T-cell (primary cell): ENCODE measurements at regions of chr11 and their contacts with region 1.

Region 1: GRCh38 chr11:82883853-82884252 is 16.4 kb downstream of the PRCP start:
- DNase-seq: no peak
- ATAC-seq: no peak
- H3K4me3 ChIP-seq: no peak overlapping the region
- H3K4me3 Mint-ChIP-seq: no peak overlapping the region
- H3K27ac ChIP-seq: no peak overlapping the region
- H3K27ac Mint-ChIP-seq: no peak overlapping the region
- H3K4me1 ChIP-seq: no peaks in the 10 kb centered on the region
- H3K4me1 Mint-ChIP-seq: peaks cover 2 to 12% (median 2%) of the 10 kb centered on the region in 3 donors
- H3K27me3 ChIP-seq: no peaks in the 10 kb centered on the region
- H3K27me3 Mint-ChIP-seq: no peaks in the 10 kb centered on the region

Region 2: DNA sequence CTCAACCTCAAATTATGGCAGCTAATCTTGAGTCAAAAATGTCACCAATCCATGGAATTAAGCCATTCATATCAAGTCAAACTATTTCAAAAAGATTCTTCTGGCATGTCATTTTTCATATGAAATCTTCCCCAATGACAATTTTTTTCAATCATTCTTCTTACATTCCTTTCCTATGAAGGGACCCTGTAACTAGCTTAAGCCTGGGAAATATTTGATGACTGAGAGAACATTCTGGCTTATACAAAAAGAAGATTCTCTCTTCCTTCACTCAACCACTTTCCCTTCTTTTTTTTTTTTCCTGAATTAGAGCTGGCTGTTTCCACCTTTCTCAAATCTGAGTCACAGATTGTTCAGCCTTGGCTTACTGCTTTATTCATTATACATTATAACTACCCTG is 1053.9 kb before region 1 on chr11:
- CTCF ChIA-PET with region 1: no interaction called
- POLR2A ChIA-PET with region 1: no interaction called
- DNase-seq: no peak
- ATAC-seq: no peak
- H3K4me3 ChIP-seq: no peak overlapping the region
- H3K4me3 Mint-ChIP-seq: no peak overlapping the region
- H3K27ac ChIP-seq: no peak overlapping the region
- H3K27ac Mint-ChIP-seq: no peak overlapping the region
- H3K4me1 ChIP-seq: no peaks in the 10 kb centered on the region
- H3K4me1 Mint-ChIP-seq: no peaks in the 10 kb centered on the region
- H3K27me3 ChIP-seq: no peaks in the 10 kb centered on the region
- H3K27me3 Mint-ChIP-seq: peaks cover 0 to 5% of the 10 kb centered on the region in 2 donors

Region 3: DNA sequence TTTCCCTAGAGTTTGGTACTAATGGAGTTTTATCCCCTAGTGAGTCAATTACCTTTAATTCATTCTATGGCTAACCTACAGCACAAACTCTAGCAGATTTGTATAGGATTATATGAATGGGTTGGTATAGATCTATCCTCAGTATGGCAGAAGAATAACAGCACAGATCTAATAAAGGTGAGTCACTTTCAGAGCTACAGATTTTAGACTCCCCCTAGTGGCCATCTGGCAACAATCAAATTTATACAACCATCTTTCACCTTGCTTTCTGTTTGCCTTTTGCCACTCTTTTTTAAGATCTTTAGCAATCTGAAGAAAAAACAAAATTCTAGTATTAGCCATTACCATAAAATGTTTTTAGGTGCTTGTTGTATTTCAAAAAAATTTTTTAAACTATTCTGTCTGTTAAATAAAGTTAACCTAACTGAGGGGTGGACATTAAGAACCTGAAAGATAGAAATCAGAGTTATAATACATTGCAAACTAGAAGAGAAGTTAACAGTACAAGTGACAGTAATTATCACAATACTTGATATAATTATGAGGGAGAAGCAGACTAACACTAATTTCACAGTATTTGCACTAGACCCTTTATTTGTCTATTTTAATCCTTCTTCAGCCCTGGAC is 43.5 kb after region 1 on chr11:
- CTCF ChIA-PET with region 1: no interaction called
- POLR2A ChIA-PET with region 1: no interaction called
- DNase-seq: peak in 19 of 35 experiments; percentile 4 to 80 (median 25)
- ATAC-seq: peak; percentile 82 to 91 (median 88)
- H3K4me3 ChIP-seq: no peak overlapping the region
- H3K4me3 Mint-ChIP-seq: peak overlapping the region in 1 of 3 donors; percentile 31
- H3K27ac ChIP-seq: no peak overlapping the region
- H3K27ac Mint-ChIP-seq: peak overlapping the region; percentile 57 to 61
- H3K4me1 ChIP-seq: peaks cover 6 to 17% of the 10 kb centered on the region in 2 experiments
- H3K4me1 Mint-ChIP-seq: peaks cover 36 to 39% (median 37%) of the 10 kb centered on the region in 3 donors
- H3K27me3 ChIP-seq: no peaks in the 10 kb centered on the region
- H3K27me3 Mint-ChIP-seq: no peaks in the 10 kb centered on the region

Region 4: DNA sequence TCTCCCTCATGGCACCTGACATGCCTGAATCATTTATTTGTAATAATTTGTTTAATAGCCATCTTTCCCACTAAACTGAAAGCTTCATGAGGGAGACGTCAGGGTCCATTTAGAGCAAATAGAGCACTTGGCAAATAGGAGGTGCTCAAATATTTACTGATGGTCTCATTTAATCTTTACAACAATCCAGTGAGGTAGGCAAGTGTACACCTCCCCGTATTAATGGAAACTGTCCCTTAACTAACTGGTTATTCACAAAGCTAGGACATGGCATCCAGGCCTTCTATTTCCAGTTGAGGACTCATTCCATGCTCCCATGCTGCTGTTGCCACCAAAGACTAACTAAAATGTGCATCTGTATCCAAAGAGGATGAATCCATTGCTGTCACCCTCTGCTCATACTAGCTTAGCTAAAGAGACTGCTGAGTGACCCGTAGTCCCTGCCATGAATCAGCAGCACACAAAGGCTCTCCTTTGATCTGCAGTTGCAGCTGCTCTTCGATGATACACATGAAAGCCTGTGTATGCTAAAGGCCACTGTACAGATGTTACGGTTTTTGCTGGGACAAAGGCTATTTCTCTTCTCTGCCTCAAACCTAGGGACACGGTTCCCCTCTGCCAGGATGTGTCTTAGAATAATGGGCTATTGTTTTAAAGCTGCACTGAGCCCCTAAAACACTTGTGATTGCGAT is 105.2 kb after region 1 on chr11:
- CTCF ChIA-PET with region 1: interaction called in 1 of 2 experiments, 18 read pairs
- POLR2A ChIA-PET with region 1: no interaction called
- DNase-seq: no peak
- ATAC-seq: peak in 1 of 4 experiments; percentile 12
- H3K4me3 ChIP-seq: no peak overlapping the region
- H3K4me3 Mint-ChIP-seq: no peak overlapping the region
- H3K27ac ChIP-seq: no peak overlapping the region
- H3K27ac Mint-ChIP-seq: peak overlapping the region in 1 of 2 donors; percentile 5
- H3K4me1 ChIP-seq: no peaks in the 10 kb centered on the region
- H3K4me1 Mint-ChIP-seq: peaks cover 15 to 36% (median 16%) of the 10 kb centered on the region in 3 donors
- H3K27me3 ChIP-seq: no peaks in the 10 kb centered on the region
- H3K27me3 Mint-ChIP-seq: no peaks in the 10 kb centered on the region